ENCODE measurements at regions of chr16 and their contacts with region 1.

Region 1: GRCh38 chr16:70534971-70535370 is 11.4 kb downstream of the SF3B3 start:
- DNase-seq: no peak
- ATAC-seq: no peak
- H3K4me3 ChIP-seq: no peak overlapping the region
- H3K27ac ChIP-seq: no peak overlapping the region
- H3K4me1 ChIP-seq: no peaks in the 10 kb centered on the region
- H3K27me3 ChIP-seq: no peaks in the 10 kb centered on the region
- CTCF ChIP-seq: no peak

Region 2: DNA sequence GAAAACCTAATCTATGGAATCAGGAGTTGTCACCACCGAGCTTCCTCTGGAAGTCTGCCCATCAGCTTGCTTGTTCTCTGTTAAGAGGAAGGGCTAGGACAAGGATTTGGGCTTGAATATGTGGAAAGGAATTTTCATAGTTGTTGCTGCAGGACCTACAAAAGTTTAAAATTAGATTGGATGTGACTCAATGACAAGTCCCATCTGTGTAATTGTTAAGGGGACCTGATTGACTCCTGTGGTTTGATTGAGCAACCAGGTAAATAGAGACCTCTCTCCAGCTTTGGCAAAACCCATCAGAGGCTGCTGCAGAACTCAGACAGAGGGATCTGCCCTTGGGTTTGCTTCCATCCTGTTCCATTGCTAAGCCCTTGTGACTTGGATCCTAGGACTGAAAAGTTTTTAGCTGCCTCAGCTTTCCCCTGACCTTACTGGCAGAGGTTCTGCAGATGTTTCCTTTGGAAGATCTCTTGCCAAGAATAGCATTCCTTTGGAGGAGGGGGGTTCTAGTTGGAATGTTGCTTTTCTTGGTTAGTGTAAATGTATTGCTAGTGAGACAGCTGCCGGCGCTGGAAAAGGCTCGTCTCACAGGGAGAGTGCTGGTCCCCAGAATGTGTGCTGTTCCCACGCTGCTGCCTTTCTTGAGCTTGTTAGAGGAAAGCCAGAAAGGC is 38.6 kb after region 1 on chr16:
- intact Hi-C with region 1: loop called in 1 of 2 experiments (anchors 5 kb)
- DNase-seq: no peak
- ATAC-seq: peak; percentile 63 to 84 (median 74)
- H3K4me3 ChIP-seq: peak overlapping the region; percentile 1
- H3K27ac ChIP-seq: peak overlapping the region; percentile 74
- H3K4me1 ChIP-seq: peaks cover 49% of the 10 kb centered on the region
- H3K27me3 ChIP-seq: no peaks in the 10 kb centered on the region
- CTCF ChIP-seq: no peak